Endothelial cell of umbilical vein (primary cell): ENCODE measurements at regions of chr18 and their contacts with region 1.

Region 1: GRCh38 chr18:76405681-76406356 is 89.2 kb downstream of the ZNF516 start:
- DNase-seq: peak; percentile 34
- H3K4me3 ChIP-seq: no peak overlapping the region
- H3K27ac ChIP-seq: no peak overlapping the region
- H3K4me1 ChIP-seq: no peaks in the 10 kb centered on the region
- H3K27me3 ChIP-seq: no peaks in the 10 kb centered on the region
- CTCF ChIP-seq: peak; percentile 37 to 51
- POLR2A ChIP-seq: no peak

Region 2: GRCh38 chr18:76426737-76427305 is 21.0 kb after region 1 on chr18:
- CTCF ChIA-PET with region 1: no interaction called
- POLR2A ChIA-PET with region 1: no interaction called
- dilution Hi-C with region 1: no loop called
- intact Hi-C with region 1: loop called (anchors 1 kb)
- DNase-seq: no peak
- H3K4me3 ChIP-seq: no peak overlapping the region
- H3K27ac ChIP-seq: no peak overlapping the region
- H3K4me1 ChIP-seq: no peaks in the 10 kb centered on the region
- H3K27me3 ChIP-seq: no peaks in the 10 kb centered on the region
- CTCF ChIP-seq: peak; percentile 76 to 77
- POLR2A ChIP-seq: no peak

Region 3: GRCh38 chr18:76480913-76481312 is 75.1 kb after region 1 on chr18:
- CTCF ChIA-PET with region 1: no interaction called
- POLR2A ChIA-PET with region 1: no interaction called
- dilution Hi-C with region 1: no loop called
- intact Hi-C with region 1: no loop called
- DNase-seq: no peak
- H3K4me3 ChIP-seq: no peak overlapping the region
- H3K27ac ChIP-seq: no peak overlapping the region
- H3K4me1 ChIP-seq: peaks cover 20% of the 10 kb centered on the region
- H3K27me3 ChIP-seq: no peaks in the 10 kb centered on the region
- CTCF ChIP-seq: no peak
- POLR2A ChIP-seq: no peak

Region 4: DNA sequence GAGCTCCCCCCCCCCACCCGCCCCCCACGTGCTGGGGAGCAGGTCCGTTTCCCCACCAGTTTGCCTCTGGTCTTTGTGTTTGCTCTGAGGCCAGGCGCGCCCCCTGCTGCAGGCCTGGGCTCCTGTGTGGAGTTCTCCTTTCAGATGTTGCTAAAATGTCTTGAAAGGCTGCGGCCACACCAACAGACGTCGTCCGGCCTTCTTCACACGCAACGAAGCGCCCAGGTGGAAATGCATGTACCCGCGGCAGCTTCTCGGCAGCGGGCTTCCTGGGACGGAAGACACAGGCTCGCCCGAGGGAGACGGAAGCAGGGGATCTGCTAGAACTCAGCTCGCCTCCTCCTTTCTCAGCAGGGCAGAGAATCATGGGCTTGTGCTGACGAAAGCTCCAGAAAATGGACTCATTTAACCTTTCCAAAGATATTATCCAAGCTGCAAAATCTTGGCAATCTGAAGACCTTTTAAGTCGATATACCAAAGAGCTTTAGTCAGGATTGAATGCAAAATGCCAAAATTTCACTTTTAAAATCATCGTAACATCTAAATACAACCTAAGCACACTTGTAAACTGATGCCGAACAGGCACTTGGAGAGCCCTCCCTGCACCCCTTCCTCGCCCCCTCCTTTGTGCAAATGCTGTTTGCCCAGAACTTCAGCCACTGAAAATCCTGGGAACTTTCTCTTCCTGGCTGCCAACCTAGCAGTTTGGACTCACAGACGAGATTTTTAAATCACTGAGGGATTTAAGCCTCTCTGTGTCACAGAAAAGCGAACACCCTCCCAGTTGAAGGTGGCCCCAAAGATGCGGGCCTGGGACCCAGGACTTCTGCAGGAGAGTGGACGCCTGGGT is 214.7 kb after region 1 on chr18:
- CTCF ChIA-PET with region 1: interaction called, 34 read pairs
- POLR2A ChIA-PET with region 1: no interaction called
- dilution Hi-C with region 1: no loop called
- intact Hi-C with region 1: loop called (anchors 1 kb)
- DNase-seq: peak; percentile 24
- H3K4me3 ChIP-seq: no peak overlapping the region
- H3K27ac ChIP-seq: no peak overlapping the region
- H3K4me1 ChIP-seq: no peaks in the 10 kb centered on the region
- H3K27me3 ChIP-seq: peaks cover 7 to 15% of the 10 kb centered on the region in 2 experiments
- CTCF ChIP-seq: peak in 1 of 2 donors; percentile 67
- POLR2A ChIP-seq: no peak

Region 5: GRCh38 chr18:76686737-76687262 is 281.0 kb after region 1 on chr18:
- CTCF ChIA-PET with region 1: interaction called, 75 read pairs
- POLR2A ChIA-PET with region 1: no interaction called
- dilution Hi-C with region 1: no loop called
- intact Hi-C with region 1: loop called (anchors 1 kb)
- DNase-seq: peak; percentile 47
- H3K4me3 ChIP-seq: no peak overlapping the region
- H3K27ac ChIP-seq: no peak overlapping the region
- H3K4me1 ChIP-seq: no peaks in the 10 kb centered on the region
- H3K27me3 ChIP-seq: peaks cover 0 to 2% of the 10 kb centered on the region in 2 experiments
- CTCF ChIP-seq: peak; percentile 37 to 55
- POLR2A ChIP-seq: no peak

Region 6: GRCh38 chr18:76709659-76710645 is 304.1 kb after region 1 on chr18:
- CTCF ChIA-PET with region 1: interaction called, 169 read pairs
- POLR2A ChIA-PET with region 1: no interaction called
- dilution Hi-C with region 1: no loop called
- intact Hi-C with region 1: loop called (anchors 1 kb)
- DNase-seq: peak; percentile 55
- H3K4me3 ChIP-seq: no peak overlapping the region
- H3K27ac ChIP-seq: no peak overlapping the region
- H3K4me1 ChIP-seq: no peaks in the 10 kb centered on the region
- H3K27me3 ChIP-seq: no peaks in the 10 kb centered on the region
- CTCF ChIP-seq: peak; percentile 72 to 84
- POLR2A ChIP-seq: no peak